CD14-positive monocyte (primary cell): ENCODE measurements at regions of chr7 and their contacts with region 1.

Region 1: DNA sequence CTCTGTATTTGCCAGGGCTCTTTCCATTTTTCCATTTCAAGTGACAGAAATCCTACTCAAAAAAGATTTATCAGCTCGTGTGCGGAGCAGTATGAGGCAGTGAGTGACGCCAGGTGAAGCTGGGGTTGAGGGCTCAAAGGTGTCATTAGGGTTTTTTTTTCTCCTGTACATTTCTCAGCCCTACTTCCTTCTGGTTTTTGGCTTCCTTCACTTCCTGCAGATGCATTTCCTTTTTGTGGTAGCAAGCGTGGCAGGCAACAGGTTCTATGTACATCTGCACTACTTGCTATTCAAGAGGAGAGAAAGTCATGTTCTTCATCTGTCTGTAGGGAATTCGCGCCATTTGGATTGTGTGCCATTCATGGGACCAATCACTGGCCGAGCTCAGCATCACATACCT is 52.8 kb upstream of the AOAH start:
- DNase-seq: peak; percentile 26 to 56 (median 34)
- H3K4me3 ChIP-seq: peak overlapping the region in 1 of 3 experiments; percentile 42
- H3K4me3 Mint-ChIP-seq: peak overlapping the region in 1 of 2 donors; percentile 46
- H3K27ac ChIP-seq: peak overlapping the region in 1 of 2 donors; percentile 90
- H3K27ac Mint-ChIP-seq: peak overlapping the region; percentile 1 to 97 (median 75)
- H3K4me1 ChIP-seq: peaks cover 54 to 68% of the 10 kb centered on the region in 2 donors
- H3K4me1 Mint-ChIP-seq: peaks cover 66% of the 10 kb centered on the region
- H3K27me3 ChIP-seq: no peaks in the 10 kb centered on the region
- H3K27me3 Mint-ChIP-seq: peaks cover 0 to 2% (median 1%) of the 10 kb centered on the region in 3 donors
- CTCF ChIP-seq: no peak

Region 2: GRCh38 chr7:36736899-36737211 is 40.2 kb before region 1 on chr7:
- intact Hi-C with region 1: loop called (anchors 5 kb)
- DNase-seq: peak; percentile 82 to 95 (median 94)
- H3K4me3 ChIP-seq: peak overlapping the region; percentile 47 to 81 (median 67)
- H3K4me3 Mint-ChIP-seq: peak overlapping the region; percentile 77 to 98
- H3K27ac ChIP-seq: peak overlapping the region; percentile 97 to 98
- H3K27ac Mint-ChIP-seq: peak overlapping the region; percentile 95 to 100 (median 99)
- H3K4me1 ChIP-seq: peaks cover 69 to 95% of the 10 kb centered on the region in 2 donors
- H3K4me1 Mint-ChIP-seq: peaks cover 85% of the 10 kb centered on the region
- H3K27me3 ChIP-seq: no peaks in the 10 kb centered on the region
- H3K27me3 Mint-ChIP-seq: peaks cover 0 to 1% (median 0%) of the 10 kb centered on the region in 3 donors
- CTCF ChIP-seq: no peak

Region 3: GRCh38 chr7:37065779-37066271 is 288.8 kb after region 1 on chr7:
- intact Hi-C with region 1: no loop called
- DNase-seq: peak; percentile 7 to 71 (median 20)
- H3K4me3 ChIP-seq: no peak overlapping the region
- H3K4me3 Mint-ChIP-seq: no peak overlapping the region
- H3K27ac ChIP-seq: no peak overlapping the region
- H3K27ac Mint-ChIP-seq: peak overlapping the region in 4 of 7 donors; percentile 16 to 70 (median 40)
- H3K4me1 ChIP-seq: no peaks in the 10 kb centered on the region
- H3K4me1 Mint-ChIP-seq: peaks cover 4% of the 10 kb centered on the region
- H3K27me3 ChIP-seq: no peaks in the 10 kb centered on the region
- H3K27me3 Mint-ChIP-seq: peaks cover 0 to 1% (median 0%) of the 10 kb centered on the region in 3 donors
- CTCF ChIP-seq: no peak